Head of caudate nucleus (tissue), 42 donors: ENCODE measurements at regions of chr5 and their contacts with region 1.

Region 1: DNA sequence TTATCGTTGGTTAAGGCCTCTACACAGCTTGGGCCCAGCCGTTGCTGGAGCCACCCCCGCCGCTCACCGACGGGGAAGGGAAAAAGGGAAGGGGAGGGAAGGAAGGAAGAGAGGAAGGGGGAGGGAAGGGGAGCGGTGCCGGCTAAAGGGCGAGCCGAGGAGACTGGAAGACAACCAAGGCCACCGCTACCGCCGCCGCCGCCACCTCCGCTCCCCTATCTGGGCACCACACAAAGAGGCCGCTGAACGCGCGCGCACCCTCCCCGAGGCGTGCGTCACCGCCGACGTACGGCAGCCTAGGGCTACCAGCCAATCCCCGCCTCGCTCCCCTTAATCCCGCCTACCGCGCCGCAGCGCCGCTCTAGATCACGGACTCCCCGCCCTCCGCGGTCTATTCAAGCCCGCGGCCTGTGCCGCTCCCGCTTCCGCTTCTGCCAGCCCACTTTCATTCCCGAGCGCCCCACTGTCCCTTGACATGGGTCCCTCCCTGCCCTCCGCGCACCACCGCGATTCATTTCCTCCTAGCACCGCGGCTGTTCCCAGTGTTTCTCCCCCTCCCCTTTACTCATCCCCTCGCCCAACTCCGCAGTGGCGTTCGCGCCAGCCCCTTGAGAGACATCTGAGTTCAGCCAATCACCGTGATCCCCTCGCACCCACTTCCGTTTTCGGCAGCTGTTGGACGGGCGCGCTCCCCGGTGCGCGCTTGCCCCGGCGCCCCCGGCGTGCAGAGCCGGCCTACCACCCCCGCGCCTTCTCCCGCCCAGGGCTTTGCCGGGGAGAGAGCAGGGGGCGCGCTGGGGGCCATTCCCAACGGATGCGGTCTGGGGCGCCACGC is at the start of gene HNRNPA0:
- DNase-seq: peak; percentile 95 to 99 (median 98)

Region 2: DNA sequence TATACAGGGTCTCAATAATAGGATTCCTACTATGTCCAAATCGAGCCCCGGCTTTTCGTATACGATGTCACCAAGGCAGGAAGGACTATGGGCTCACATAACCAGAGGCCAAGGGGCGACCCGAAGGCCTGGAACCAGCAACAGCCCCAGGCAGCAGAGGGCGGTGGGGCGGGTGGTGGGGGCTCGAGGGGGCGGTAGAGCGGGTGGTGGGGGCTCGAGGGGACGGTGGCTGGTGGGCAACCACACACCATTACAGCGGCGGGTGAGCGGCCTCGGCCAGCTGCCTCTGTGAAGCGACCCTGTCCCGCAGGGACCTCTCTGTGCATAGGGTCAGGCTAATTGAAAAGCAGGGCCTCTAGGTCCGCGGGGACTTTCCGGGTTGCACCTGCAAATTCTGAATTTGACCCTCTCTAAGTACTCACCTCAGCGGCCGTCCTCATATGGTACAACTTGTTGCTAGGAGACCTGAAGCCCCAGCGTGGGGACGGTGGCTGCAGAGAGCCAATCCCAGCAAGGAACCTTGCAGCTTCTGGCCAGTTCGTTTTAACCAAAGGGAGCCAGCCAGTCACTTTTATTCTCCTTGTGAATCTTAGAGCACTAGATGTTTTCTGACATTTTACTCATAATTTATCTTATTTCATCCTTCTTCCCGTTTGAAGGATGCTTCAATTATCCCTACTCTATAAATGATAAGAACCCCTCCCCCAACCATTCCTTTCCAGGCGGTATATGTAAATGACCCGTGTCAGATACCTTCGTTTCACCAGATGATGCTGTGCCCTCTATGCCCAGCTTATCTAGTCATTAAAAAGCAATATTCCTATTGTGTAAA is 384.8 kb after region 1 on chr5 and contains the start of gene NME5:
- intact Hi-C with region 1: loop called (anchors 10 kb)
- DNase-seq: peak; percentile 66 to 93 (median 81)

Region 3: DNA sequence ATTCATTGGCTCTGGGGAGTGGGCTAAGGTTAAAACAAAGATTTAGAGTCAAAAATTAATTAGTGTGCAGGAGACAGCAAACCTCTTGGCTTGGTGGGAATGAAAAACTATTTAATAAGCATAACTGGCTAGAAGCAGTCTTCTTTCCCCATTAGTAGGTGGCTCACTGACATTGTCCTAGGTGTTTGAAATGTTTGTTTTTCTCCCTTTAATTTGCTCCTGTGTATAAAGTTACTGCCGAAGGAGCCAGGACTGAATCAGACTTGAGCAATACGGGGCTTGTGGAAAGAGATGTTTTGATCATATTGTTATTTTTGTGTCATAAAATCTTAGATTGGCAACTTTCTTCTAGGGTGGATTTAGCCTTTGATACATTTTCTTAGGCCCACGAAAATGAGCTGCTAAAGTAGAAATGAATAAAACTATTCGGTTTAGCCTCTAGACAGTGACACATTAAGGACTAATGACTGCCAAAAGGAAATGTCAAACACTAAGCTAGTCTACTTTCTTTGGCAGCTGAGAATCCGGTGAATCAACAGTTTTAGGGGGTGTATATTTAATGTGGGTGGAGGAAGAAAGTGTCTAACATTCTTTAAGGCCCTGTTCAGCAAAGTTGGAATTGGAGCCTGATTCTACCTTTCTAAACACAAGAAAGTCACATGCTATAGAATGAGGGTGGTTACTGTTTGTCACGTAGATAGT is 1090.6 kb after region 1 on chr5:
- intact Hi-C with region 1: no loop called
- DNase-seq: peak in 1 of 42 donors; percentile 12